ENCODE measurements at regions of chr1 and their contacts with region 1.

Region 1: DNA sequence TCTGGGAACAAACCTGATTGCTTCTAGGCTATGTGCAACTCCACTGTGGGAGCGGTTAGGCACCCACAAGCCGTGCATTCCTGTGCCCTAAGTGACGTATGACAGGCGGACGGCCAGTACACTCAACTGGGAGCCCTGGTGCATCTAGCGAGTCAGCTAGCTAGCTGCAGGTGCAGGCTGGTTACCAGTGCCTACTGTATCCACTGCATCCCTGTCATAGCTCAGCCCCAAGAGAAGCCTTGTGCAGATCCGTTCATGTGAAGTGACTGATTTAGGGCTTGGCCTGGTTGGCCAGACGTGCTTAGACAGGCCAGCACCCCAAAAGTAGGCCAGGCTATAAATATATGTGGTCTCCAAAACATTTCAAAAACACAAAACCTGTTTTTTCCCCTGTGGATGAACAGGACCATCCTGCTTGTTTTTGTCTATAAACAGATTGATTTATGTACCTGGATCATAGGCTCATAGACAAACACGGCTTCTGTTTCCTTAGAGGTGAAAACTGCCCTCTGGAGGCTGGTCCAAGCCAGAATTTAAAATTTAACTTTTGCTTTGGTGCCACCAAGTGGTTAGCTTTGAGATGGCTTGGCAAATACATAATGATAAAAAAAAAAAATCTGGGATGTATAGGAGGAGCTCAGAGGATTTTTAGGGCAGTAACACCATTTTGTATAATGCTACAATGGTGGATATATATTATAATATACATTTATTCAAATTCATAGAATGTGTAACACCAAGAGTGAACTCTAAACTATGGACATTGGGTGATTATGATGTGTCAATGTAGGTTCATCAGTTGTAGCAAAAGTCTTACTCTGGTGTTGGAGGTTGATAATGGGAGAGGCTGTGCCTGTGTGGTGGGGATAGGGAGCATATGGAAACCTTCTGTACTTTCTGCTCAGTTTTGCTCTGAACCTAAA is 68.5 kb downstream of the GIPC2 start:
- H3K4me3 ChIP-seq: no peak overlapping the region
- H3K27ac ChIP-seq: no peak overlapping the region
- H3K4me1 ChIP-seq: no peaks in the 10 kb centered on the region
- CTCF ChIP-seq: peak; percentile 85

Region 2: GRCh38 chr1:77970192-77970591 is 144.1 kb before region 1 on chr1:
- CTCF ChIA-PET with region 1: interaction called, 17 read pairs
- POLR2A ChIA-PET with region 1: no interaction called
- H3K4me3 ChIP-seq: no peak overlapping the region
- H3K27ac ChIP-seq: no peak overlapping the region
- H3K4me1 ChIP-seq: no peaks in the 10 kb centered on the region
- CTCF ChIP-seq: no peak

Region 3: DNA sequence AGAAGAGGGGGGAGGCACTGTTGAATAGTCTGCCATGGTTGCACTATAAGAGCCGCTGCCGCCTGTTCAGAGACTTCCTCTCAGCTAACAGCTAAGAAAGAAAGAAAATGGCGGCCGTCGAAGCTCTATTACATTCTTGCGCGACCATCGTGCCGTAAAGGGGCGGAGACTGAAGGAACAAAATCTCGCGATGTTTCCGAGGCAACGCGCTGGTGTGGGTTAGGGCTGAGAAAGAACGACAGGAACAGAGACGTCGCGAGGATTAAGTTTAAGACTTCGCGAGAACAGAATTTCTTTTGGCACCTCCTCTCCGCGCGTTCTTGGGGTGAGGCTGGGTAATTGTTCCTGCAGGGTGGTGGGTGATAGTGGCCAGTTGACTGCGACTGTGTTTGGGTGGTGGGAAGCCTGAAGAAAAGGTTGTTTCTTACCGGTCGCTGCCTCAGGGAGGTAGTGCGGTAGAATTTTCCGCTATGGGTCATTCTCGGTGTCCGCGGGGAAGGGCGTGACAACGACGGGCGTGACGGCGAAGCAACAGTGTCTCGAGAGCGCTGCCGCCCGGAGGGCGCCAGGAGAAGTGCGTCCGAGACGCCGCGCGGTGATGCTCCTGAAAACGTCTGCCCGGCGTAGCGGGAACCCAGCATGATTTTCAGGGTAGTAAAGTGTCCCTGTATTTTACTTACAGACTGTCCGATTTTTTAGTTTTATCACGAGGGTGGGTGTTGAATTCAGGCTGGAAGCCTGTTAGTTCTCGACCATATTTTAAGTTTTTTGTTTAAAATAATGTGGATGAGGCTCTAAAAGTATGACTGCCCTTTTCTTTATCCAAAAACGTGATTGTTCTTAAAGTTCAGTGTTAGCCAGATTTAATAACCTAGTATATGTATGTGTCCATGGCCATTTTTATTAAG is 135.1 kb before region 1 on chr1 and contains the start of gene FUBP1:
- CTCF ChIA-PET with region 1: interaction called, 10 read pairs
- POLR2A ChIA-PET with region 1: interaction called, 4 read pairs
- H3K4me3 ChIP-seq: peak within 1 kb of the TSS; percentile 96
- H3K27ac ChIP-seq: peak within 1 kb of the TSS; percentile 77
- H3K4me1 ChIP-seq: peaks cover 6% of the 10 kb centered on the region; the same call in 1 of the 2 replicates
- CTCF ChIP-seq: peak; percentile 93

Region 4: GRCh38 chr1:78277253-78277652 is 163.0 kb after region 1 on chr1:
- CTCF ChIA-PET with region 1: no interaction called
- POLR2A ChIA-PET with region 1: no interaction called
- H3K4me3 ChIP-seq: no peak overlapping the region
- H3K27ac ChIP-seq: no peak overlapping the region
- H3K4me1 ChIP-seq: no peaks in the 10 kb centered on the region
- CTCF ChIP-seq: no peak